Ovary (tissue), 10 donors: ENCODE measurements at regions of chr18 and their contacts with region 1.

Region 1: DNA sequence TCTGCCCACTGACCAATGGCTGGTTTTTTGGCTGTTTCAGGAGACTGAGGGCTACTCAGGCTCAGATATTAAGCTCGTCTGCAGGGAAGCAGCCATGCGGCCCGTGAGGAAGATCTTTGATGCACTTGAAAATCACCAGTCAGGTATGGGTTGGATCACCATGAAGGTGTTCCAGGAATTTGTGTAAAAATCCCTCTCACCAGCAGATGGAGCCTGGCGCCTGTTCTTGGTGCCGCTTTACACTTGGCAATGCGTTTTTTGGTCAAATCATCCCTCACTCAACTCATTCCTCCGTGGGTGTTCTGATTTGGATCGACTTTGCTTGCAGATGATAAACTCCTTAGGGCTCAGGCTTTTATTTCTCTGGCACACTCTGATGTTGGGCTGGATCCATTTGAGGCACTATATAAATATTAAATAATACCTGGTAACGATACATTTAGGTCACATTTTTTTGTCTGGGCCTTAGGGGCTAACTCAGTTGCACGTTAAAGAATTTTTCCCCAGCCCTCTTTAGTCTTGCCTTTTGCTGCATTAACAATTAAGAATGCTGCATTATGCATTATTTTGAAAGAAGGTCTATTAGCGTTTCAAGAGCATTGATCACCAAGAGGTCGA is 50.0 kb downstream of the HDHD2 start:
- DNase-seq: peak; percentile 11 to 54 (median 51)
- H3K4me3 ChIP-seq: no peak overlapping the region
- H3K27ac ChIP-seq: no peak overlapping the region
- H3K4me1 ChIP-seq: peaks cover 1% of the 10 kb centered on the region
- H3K27me3 ChIP-seq: no peaks in the 10 kb centered on the region
- CTCF ChIP-seq: peak; percentile 37 to 50 (median 47)
- EP300 ChIP-seq: no peak
- POLR2A ChIP-seq: no peak

Region 2: DNA sequence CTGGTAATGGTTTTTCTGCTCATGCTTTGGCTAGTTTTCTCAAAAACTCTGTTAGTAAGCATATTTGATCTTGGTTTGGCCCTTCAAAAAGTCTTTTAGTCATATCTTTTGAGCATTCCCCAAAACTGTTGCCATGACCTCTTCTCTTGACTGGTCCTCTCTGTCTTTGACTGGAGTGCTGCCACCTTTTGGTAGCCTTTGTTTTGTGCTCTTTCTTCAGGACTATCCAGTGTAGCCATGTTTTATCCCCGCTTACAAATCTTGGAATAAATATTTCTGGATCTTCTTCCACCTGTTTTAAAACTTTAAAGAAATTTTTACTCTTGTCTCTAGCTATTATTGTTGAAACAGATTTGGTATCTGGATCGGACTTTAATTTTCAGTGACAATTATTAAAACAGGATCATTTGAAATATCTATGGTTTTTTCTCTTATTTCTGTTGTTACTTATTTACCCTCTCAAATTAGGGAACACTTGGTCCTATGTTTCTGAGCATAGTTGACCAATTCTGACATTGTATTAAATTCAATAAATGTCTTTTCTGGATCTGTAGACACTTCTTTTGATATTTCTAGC is 63.9 kb before region 1 on chr18:
- intact Hi-C with region 1: no loop called
- DNase-seq: no peak
- H3K4me3 ChIP-seq: no peak overlapping the region
- H3K27ac ChIP-seq: no peak overlapping the region
- H3K4me1 ChIP-seq: no peaks in the 10 kb centered on the region
- H3K27me3 ChIP-seq: no peaks in the 10 kb centered on the region
- CTCF ChIP-seq: no peak
- EP300 ChIP-seq: no peak
- POLR2A ChIP-seq: no peak

Region 3: GRCh38 chr18:47404845-47405244 is 304.5 kb after region 1 on chr18:
- intact Hi-C with region 1: no loop called
- DNase-seq: no peak
- H3K4me3 ChIP-seq: no peak overlapping the region
- H3K27ac ChIP-seq: no peak overlapping the region
- H3K4me1 ChIP-seq: no peaks in the 10 kb centered on the region
- H3K27me3 ChIP-seq: no peaks in the 10 kb centered on the region
- CTCF ChIP-seq: no peak
- EP300 ChIP-seq: no peak
- POLR2A ChIP-seq: no peak

Region 4: DNA sequence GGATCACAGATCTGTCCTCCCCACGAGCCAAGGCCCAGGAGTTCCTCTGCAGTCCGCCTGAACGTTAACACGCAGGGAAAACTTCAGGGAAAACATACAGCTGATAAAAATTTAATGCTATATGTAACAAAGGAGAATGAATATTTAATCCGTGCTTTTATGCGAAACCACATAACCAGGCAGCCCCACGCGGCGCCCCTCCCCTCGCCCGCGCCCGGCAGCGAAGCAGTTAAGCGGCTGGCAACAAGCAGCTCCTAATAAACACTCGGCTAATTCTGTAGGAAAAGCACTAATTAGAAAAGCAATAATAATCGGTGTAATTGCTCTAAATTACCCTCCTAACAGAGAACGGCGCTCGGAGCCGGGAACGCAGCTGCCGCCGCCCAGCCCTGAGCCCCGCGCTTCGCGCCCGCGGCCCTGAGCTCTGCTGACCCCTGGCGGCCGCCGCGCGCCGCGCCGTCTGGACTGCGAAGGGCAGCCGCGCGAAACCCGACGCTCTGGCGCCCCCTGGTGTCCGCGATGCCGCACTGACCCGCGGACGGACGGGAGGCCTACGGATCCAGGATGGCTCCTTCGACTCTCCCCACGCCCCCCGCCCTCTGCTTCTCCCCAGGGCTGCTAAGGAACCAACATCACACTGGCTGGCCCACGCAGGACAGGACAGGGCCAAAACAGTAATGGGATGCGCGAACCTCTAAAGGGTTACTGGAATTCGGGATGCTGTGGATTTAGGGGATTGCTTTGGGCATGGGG is 648.7 kb after region 1 on chr18:
- intact Hi-C with region 1: loop called in 2 of 4 experiments (anchors 5 to 10 kb)
- DNase-seq: peak; percentile 65 to 88 (median 79)
- H3K4me3 ChIP-seq: peak overlapping the region; percentile 39
- H3K27ac ChIP-seq: no peak overlapping the region
- H3K4me1 ChIP-seq: no peaks in the 10 kb centered on the region
- H3K27me3 ChIP-seq: no peaks in the 10 kb centered on the region
- CTCF ChIP-seq: peak; percentile 97 to 100 (median 99)
- EP300 ChIP-seq: peak; percentile 16
- POLR2A ChIP-seq: no peak